K562 (cell line): ENCODE measurements at regions of chr18 and their contacts with region 1.

Region 1: GRCh38 chr18:51009072-51009471 is 20.9 kb upstream of the SMAD4 start:
- DNase-seq: no peak
- ATAC-seq: no peak
- H3K4me3 ChIP-seq: no peak overlapping the region
- H3K27ac ChIP-seq: no peak overlapping the region
- H3K4me1 ChIP-seq: peaks cover 5 to 20% of the 10 kb centered on the region in 2 experiments; a peak in 3 of 5 replicates
- H3K27me3 ChIP-seq: no peaks in the 10 kb centered on the region
- CTCF ChIP-seq: no peak
- EP300 ChIP-seq: no peak
- POLR2A ChIP-seq: no peak
- RAD21 ChIP-seq: no peak

Region 2: GRCh38 chr18:50878345-50879301 is 130.4 kb before region 1 on chr18 and contains the start of gene ME2:
- CTCF ChIA-PET with region 1: no interaction called
- POLR2A ChIA-PET with region 1: no interaction called
- in situ Hi-C with region 1: no loop called
- intact Hi-C with region 1: loop called (anchors 10 kb)
- DNase-seq: peak; percentile 90 to 96 (median 96)
- ATAC-seq: peak; percentile 98
- H3K4me3 ChIP-seq: peak within 1 kb of the TSS; percentile 74
- H3K27ac ChIP-seq: peak within 1 kb of the TSS; percentile 77
- H3K4me1 ChIP-seq: peaks cover 3 to 4% of the 10 kb centered on the region in 2 experiments; a peak in 3 of 5 replicates
- H3K27me3 ChIP-seq: no peaks in the 10 kb centered on the region
- CTCF ChIP-seq: no peak
- EP300 ChIP-seq: no peak
- POLR2A ChIP-seq: peak; percentile 80
- RAD21 ChIP-seq: no peak
- polyA plus RNA-seq, gene ME2: 12.3 to 13.0 TPM

Region 3: GRCh38 chr18:51128533-51128932 is 119.5 kb after region 1 on chr18:
- CTCF ChIA-PET with region 1: no interaction called
- POLR2A ChIA-PET with region 1: no interaction called
- in situ Hi-C with region 1: no loop called
- intact Hi-C with region 1: no loop called
- DNase-seq: no peak
- ATAC-seq: no peak
- H3K4me3 ChIP-seq: no peak overlapping the region
- H3K27ac ChIP-seq: no peak overlapping the region
- H3K4me1 ChIP-seq: no peaks in the 10 kb centered on the region
- H3K27me3 ChIP-seq: peaks cover 0 to 10% of the 10 kb centered on the region in 2 experiments; a peak in 3 of 5 replicates
- CTCF ChIP-seq: no peak
- EP300 ChIP-seq: no peak
- POLR2A ChIP-seq: no peak
- RAD21 ChIP-seq: no peak